ENCODE measurements at regions of chr19 and their contacts with region 1.

Region 1: DNA sequence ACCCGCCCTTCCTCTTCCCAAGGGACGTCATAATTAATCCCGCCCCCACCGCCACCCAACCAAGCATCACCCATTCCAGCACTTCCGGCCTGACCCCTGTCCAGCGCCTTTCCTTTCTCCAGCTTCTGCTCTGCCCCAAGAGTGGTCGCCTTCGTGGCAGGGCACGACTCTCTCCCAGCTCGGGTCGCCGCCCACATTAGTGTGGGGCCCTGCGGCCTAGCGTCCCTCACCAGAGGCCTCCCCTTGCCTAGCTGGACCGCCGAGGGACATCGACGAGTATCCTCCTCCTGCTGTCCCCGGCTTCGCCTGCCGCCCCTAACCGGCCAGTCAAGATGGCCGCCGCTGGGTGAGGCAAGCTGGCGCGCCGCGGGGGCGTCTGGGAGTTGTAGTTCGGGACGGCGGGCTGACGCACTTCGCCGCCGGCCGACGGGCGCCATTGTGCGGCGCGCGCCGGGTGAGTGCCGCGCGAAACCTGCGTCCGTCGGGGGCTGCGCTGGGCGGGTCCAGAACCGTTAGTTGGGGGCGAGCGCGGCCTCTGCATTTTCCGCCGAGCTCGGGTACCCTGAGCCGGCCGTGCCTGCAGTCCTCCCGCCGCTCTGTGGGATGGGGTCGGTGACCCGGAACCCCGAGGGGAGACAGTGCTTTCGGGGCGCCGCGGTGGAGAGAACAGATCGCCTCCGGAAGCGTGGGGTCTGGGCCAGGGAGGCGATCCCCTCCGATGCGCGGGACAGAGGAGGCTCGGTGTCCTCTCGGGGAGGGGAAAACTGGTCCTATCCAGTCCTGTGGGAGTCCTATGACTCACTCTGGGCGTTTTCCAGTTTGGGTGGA is at the start of gene ZNF274:
- DNase-seq: peak; percentile 94
- H3K4me3 Mint-ChIP-seq: peak within 1 kb of the TSS; percentile 82
- H3K27ac Mint-ChIP-seq: peak within 1 kb of the TSS; percentile 94
- H3K4me1 Mint-ChIP-seq: peaks cover 13% of the 10 kb centered on the region
- H3K27me3 Mint-ChIP-seq: no peaks in the 10 kb centered on the region
- total RNA-seq, gene ZNF274: 14.6 to 16.9 TPM

Region 2: DNA sequence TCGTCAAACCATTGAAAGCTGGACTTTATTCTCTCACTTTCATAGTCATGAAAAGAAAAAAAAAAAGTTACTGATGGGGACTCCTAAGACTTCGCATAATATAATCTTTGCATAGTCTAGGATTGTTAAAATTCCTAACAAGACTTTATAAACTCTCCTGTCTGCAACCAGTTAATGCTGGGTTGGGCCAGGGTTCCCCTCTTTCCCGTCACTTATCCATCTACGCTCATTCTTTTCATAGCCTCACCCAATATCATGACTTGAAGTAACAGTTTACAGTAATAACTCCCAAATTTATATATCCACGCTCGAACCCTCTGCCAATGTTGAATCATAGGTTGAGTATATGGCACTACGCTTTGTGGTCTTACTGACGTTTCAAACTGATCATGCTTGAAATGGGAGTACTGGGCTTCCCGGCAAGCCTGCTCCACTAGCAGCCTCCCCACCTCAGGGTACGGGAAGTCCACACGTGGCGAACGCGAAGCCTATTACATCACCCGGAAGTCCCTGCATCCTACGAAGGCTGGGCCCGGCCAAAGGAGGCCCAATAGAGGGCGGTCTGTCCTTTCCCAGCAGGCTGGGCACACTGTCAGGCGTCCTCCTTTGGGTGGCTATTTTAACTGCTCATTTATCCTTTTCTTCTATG is 903.7 kb before region 1 on chr19:
- CTCF ChIA-PET with region 1: no interaction called
- intact Hi-C with region 1: loop called (anchors 1 kb)
- DNase-seq: peak; percentile 93
- H3K4me3 Mint-ChIP-seq: no peak overlapping the region
- H3K27ac Mint-ChIP-seq: no peak overlapping the region
- H3K4me1 Mint-ChIP-seq: peaks cover 31% of the 10 kb centered on the region
- H3K27me3 Mint-ChIP-seq: no peaks in the 10 kb centered on the region

Region 3: GRCh38 chr19:57830071-57830602 is 353.1 kb before region 1 on chr19 and contains the start of gene ZNF587B:
- CTCF ChIA-PET with region 1: no interaction called
- intact Hi-C with region 1: no loop called
- DNase-seq: peak; percentile 56
- H3K4me3 Mint-ChIP-seq: no peak within 1 kb of the TSS
- H3K27ac Mint-ChIP-seq: no peak within 1 kb of the TSS
- H3K4me1 Mint-ChIP-seq: peaks cover 26% of the 10 kb centered on the region
- H3K27me3 Mint-ChIP-seq: no peaks in the 10 kb centered on the region
- total RNA-seq, gene ZNF587B: 8.7 to 9.2 TPM

Region 4: DNA sequence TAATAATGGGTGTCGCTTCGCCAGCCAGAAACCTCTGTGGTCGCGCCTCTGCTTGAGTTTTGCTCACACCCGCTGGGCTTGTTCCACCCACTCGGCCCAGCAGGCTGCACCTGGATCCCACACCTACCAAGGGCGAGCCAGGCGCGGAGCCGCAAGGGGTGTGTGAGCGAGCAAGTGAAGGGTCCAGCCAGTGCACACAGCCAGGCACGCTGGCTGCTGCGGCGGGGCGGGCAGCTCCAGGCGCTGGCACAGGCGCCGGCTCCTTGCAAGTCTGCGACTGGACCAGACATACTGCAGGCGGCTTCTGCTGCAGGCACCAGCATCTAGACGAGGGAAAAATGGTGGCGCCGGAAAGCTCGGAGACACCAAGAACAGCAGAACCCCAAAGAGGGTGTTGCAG is 233.9 kb before region 1 on chr19:
- CTCF ChIA-PET with region 1: no interaction called
- intact Hi-C with region 1: no loop called
- DNase-seq: no peak
- H3K4me3 Mint-ChIP-seq: no peak overlapping the region
- H3K27ac Mint-ChIP-seq: no peak overlapping the region
- H3K4me1 Mint-ChIP-seq: peaks cover 17% of the 10 kb centered on the region
- H3K27me3 Mint-ChIP-seq: no peaks in the 10 kb centered on the region

Region 5: GRCh38 chr19:58154679-58155648 is 28.2 kb before region 1 on chr19:
- CTCF ChIA-PET with region 1: no interaction called
- intact Hi-C with region 1: loop called (anchors 1 kb)
- DNase-seq: peak; percentile 97
- H3K4me3 Mint-ChIP-seq: peak overlapping the region; percentile 73
- H3K27ac Mint-ChIP-seq: no peak overlapping the region
- H3K4me1 Mint-ChIP-seq: peaks cover 17% of the 10 kb centered on the region
- H3K27me3 Mint-ChIP-seq: no peaks in the 10 kb centered on the region

Region 6: DNA sequence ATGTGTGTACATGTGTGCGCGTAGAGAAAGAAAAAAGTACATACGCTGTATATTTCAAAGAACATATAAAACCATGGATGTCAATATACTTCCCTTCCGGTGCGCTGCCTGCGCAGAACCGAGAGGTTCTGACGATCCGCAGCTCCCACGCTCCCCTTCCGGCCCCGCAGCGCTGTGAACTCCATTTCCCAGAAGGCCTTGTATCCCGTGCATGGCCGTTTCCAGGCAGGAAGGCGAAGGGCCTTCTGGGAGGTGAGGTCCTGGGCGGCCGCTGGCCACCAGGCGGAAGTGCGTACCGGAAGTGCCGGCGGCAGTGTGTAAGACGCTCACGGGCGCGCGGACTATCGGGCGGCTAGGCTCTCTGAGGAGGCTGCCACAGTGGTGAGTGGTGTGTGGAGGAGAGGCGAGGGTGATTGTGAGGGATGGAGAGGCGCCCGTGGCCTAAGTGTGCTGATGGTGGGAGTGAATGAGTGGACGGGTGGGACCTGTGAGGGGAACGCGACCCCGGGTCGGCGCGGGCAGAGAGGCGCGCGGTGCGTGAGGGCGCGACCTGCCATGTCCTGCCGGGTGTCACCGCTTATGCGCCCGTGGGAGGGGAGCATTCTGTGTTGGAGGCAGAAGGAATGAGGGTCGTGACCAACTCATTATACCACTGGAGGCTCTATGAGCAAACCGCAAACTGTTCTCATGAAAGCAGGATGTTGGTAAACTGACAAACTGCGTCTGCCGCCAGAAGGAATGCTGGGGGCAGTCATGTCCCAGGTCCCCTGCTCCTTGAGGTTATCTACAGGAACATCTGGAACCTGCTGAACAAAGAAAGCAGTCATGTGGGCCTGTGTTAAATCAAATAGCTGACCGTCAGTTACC is 122.1 kb after region 1 on chr19 and contains the start of gene ERVK3-1:
- CTCF ChIA-PET with region 1: interaction called, 4 read pairs
- intact Hi-C with region 1: loop called (anchors 1 kb)
- DNase-seq: peak; percentile 95
- H3K4me3 Mint-ChIP-seq: peak within 1 kb of the TSS; percentile 100
- H3K27ac Mint-ChIP-seq: peak within 1 kb of the TSS; percentile 99
- H3K4me1 Mint-ChIP-seq: peaks cover 46% of the 10 kb centered on the region
- H3K27me3 Mint-ChIP-seq: no peaks in the 10 kb centered on the region
- total RNA-seq, gene ERVK3-1: 24.5 to 27.7 TPM

Region 7: DNA sequence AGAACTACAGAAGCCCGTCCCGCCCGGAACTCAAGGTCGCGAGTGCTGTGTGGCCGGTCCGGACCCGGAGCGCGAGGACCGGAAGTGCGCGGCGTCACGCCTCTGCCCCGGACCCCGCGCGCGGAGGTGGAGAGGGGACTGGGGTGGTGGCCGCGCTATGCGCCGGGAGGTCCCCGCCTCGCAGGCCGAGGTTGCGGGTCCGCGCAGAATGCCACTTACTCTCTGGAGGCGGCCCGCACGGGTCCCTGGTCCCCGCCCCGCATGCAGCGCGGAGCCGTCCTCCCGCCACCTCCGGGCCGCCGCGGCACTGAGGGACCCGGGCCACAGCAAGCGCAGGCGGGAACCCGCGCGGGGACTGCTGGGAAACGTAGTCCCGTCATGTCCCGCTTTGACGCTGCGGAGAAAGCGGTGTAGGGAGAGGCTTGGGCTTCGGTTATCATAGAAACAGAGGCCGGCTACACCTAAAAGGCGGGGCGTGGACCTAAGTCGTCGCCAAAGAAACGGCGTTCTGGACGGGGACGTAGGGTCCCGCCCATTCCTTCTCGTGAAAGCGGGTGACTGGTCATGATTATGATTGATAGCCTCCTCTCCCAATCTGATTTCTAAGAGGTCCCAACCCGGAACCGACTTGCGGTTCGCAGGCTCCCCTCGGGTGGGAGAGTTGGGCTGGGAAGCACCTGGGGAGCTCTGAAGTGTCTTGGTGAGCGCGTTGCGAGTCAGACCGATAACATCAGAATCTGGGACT is 197.7 kb after region 1 on chr19 and contains the start of gene ZNF837:
- CTCF ChIA-PET with region 1: no interaction called
- intact Hi-C with region 1: loop called (anchors 1 kb)
- DNase-seq: peak; percentile 99
- H3K4me3 Mint-ChIP-seq: peak within 1 kb of the TSS; percentile 86
- H3K27ac Mint-ChIP-seq: peak within 1 kb of the TSS; percentile 90
- H3K4me1 Mint-ChIP-seq: peaks cover 20% of the 10 kb centered on the region
- H3K27me3 Mint-ChIP-seq: no peaks in the 10 kb centered on the region
- total RNA-seq, gene ZNF837: 1.7 to 1.9 TPM

Region 8: GRCh38 chr19:58451358-58452101 is 268.3 kb after region 1 on chr19 and contains the start of gene ZNF324B:
- CTCF ChIA-PET with region 1: no interaction called
- intact Hi-C with region 1: loop called (anchors 1 kb)
- DNase-seq: peak; percentile 97
- H3K4me3 Mint-ChIP-seq: peak within 1 kb of the TSS; percentile 79
- H3K27ac Mint-ChIP-seq: no peak within 1 kb of the TSS
- H3K4me1 Mint-ChIP-seq: peaks cover 21% of the 10 kb centered on the region
- H3K27me3 Mint-ChIP-seq: peaks cover 11% of the 10 kb centered on the region
- total RNA-seq, gene ZNF324B: 5.8 to 6.2 TPM